Naive thymus-derived CD4-positive, alpha-beta T cell (primary cell): ENCODE measurements at regions of chr6 and their contacts with region 1.

Region 1: GRCh38 chr6:26045065-26045927 is 41.9 kb upstream of the HFE start:
- DNase-seq: peak; percentile 39 to 93 (median 89)
- ATAC-seq: peak; percentile 68
- H3K4me3 ChIP-seq: peak overlapping the region; percentile 91
- H3K4me3 Mint-ChIP-seq: peak overlapping the region; percentile 87 to 98 (median 94)
- H3K27ac ChIP-seq: peak overlapping the region; percentile 90
- H3K27ac Mint-ChIP-seq: peak overlapping the region; percentile 80 to 98 (median 95)
- H3K4me1 ChIP-seq: peaks cover 7 to 19% of the 10 kb centered on the region in 2 donors
- H3K4me1 Mint-ChIP-seq: peaks cover 8 to 51% (median 20%) of the 10 kb centered on the region in 7 donors
- H3K27me3 ChIP-seq: no peaks in the 10 kb centered on the region
- H3K27me3 Mint-ChIP-seq: peaks cover 0 to 3% (median 0%) of the 10 kb centered on the region in 5 donors

Region 2: GRCh38 chr6:25576919-25577318 is 468.4 kb before region 1 on chr6:
- CTCF ChIA-PET with region 1: no interaction called
- POLR2A ChIA-PET with region 1: no interaction called
- intact Hi-C with region 1: no loop called
- DNase-seq: no peak
- ATAC-seq: no peak
- H3K4me3 ChIP-seq: no peak overlapping the region
- H3K4me3 Mint-ChIP-seq: no peak overlapping the region
- H3K27ac ChIP-seq: no peak overlapping the region
- H3K27ac Mint-ChIP-seq: no peak overlapping the region
- H3K4me1 ChIP-seq: peaks cover 0 to 8% of the 10 kb centered on the region in 2 donors
- H3K4me1 Mint-ChIP-seq: peaks cover 1 to 20% (median 13%) of the 10 kb centered on the region in 7 donors
- H3K27me3 ChIP-seq: no peaks in the 10 kb centered on the region
- H3K27me3 Mint-ChIP-seq: peaks cover 0 to 7% (median 0%) of the 10 kb centered on the region in 5 donors

Region 3: DNA sequence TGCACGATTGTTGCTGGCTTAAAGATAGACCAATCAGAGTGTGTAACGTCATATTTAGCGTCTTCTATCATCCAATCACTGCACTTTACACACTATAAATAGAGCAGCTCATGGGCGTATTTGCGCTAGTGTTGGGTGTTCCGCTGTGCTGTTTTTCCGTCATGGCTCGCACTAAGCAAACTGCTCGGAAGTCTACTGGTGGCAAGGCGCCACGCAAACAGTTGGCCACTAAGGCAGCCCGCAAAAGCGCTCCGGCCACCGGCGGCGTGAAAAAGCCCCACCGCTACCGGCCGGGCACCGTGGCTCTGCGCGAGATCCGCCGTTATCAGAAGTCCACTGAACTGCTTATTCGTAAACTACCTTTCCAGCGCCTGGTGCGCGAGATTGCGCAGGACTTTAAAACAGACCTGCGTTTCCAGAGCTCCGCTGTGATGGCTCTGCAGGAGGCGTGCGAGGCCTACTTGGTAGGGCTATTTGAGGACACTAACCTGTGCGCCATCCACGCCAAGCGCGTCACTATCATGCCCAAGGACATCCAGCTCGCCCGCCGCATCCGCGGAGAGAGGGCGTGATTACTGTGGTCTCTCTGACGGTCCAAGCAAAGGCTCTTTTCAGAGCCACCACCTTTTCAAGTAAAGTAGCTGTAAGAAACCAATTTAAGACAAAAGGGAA is 24.8 kb before region 1 on chr6:
- CTCF ChIA-PET with region 1: interaction called, 69 read pairs
- POLR2A ChIA-PET with region 1: interaction called, 2,497 read pairs
- intact Hi-C with region 1: loop called (anchors 1 kb)
- DNase-seq: peak; percentile 68 to 94 (median 91)
- ATAC-seq: peak; percentile 66
- H3K4me3 ChIP-seq: peak overlapping the region; percentile 96
- H3K4me3 Mint-ChIP-seq: peak overlapping the region; percentile 82 to 100 (median 94)
- H3K27ac ChIP-seq: peak overlapping the region; percentile 97
- H3K27ac Mint-ChIP-seq: peak overlapping the region; percentile 95 to 100 (median 100)
- H3K4me1 ChIP-seq: peaks cover 0 to 10% of the 10 kb centered on the region in 2 donors
- H3K4me1 Mint-ChIP-seq: peaks cover 10 to 62% (median 45%) of the 10 kb centered on the region in 7 donors
- H3K27me3 ChIP-seq: no peaks in the 10 kb centered on the region
- H3K27me3 Mint-ChIP-seq: peaks cover 0 to 6% (median 0%) of the 10 kb centered on the region in 5 donors

Region 4: GRCh38 chr6:26103770-26104456 is 58.6 kb after region 1 on chr6:
- CTCF ChIA-PET with region 1: interaction called, 3 read pairs
- POLR2A ChIA-PET with region 1: interaction called, 70 read pairs
- intact Hi-C with region 1: loop called in 1 of 2 experiments (anchors 1 kb)
- DNase-seq: peak; percentile 83 to 96 (median 95)
- ATAC-seq: peak; percentile 94
- H3K4me3 ChIP-seq: peak overlapping the region; percentile 40
- H3K4me3 Mint-ChIP-seq: peak overlapping the region; percentile 81 to 97 (median 89)
- H3K27ac ChIP-seq: peak overlapping the region; percentile 75
- H3K27ac Mint-ChIP-seq: peak overlapping the region; percentile 96 to 100 (median 98)
- H3K4me1 ChIP-seq: peaks cover 4 to 12% of the 10 kb centered on the region in 2 donors
- H3K4me1 Mint-ChIP-seq: peaks cover 7 to 25% (median 22%) of the 10 kb centered on the region in 7 donors
- H3K27me3 ChIP-seq: no peaks in the 10 kb centered on the region
- H3K27me3 Mint-ChIP-seq: peaks cover 0 to 3% (median 0%) of the 10 kb centered on the region in 5 donors

Region 5: DNA sequence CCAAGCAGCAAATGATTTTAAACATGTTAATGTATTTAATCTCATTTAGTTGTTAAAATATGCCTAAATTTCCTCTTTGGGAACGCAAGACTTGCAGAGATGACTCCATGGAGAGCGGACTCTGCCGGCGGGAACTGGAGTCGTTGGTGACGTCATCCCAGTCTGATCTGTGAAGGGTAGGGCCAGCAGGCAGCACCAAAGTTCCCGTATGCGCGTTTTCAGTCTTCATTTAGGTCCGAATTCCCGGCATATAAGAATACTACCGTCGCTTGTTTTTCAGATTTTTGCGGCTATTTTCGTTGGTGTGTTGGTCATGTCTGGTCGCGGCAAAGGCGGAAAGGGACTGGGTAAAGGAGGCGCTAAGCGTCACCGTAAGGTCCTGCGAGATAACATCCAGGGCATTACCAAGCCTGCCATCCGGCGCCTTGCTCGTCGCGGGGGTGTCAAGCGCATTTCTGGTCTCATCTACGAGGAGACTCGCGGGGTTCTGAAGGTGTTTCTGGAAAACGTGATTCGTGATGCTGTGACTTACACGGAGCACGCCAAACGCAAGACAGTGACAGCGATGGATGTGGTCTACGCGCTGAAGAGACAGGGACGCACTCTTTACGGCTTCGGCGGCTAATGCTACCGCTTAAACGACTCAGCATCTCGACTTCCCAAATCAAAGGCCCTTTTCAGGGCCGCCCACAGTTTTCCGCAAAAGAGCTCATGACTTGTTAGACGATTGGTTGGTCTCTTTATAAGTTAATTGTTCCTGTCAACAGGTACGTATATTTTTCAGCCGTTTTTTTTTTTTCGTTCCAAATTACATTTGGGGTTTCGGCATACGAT is 159.3 kb after region 1 on chr6:
- CTCF ChIA-PET with region 1: no interaction called
- POLR2A ChIA-PET with region 1: interaction called, 257 read pairs
- intact Hi-C with region 1: no loop called
- DNase-seq: peak; percentile 67 to 95 (median 89)
- ATAC-seq: peak; percentile 72
- H3K4me3 ChIP-seq: peak overlapping the region; percentile 77
- H3K4me3 Mint-ChIP-seq: no peak overlapping the region
- H3K27ac ChIP-seq: peak overlapping the region; percentile 90
- H3K27ac Mint-ChIP-seq: no peak overlapping the region
- H3K4me1 ChIP-seq: peaks cover 20 to 23% of the 10 kb centered on the region in 2 donors
- H3K4me1 Mint-ChIP-seq: peaks cover 9 to 36% (median 26%) of the 10 kb centered on the region in 7 donors
- H3K27me3 ChIP-seq: no peaks in the 10 kb centered on the region
- H3K27me3 Mint-ChIP-seq: peaks cover 0 to 5% (median 0%) of the 10 kb centered on the region in 5 donors

Region 6: GRCh38 chr6:26312501-26313390 is 267.4 kb after region 1 on chr6:
- CTCF ChIA-PET with region 1: no interaction called
- POLR2A ChIA-PET with region 1: no interaction called
- intact Hi-C with region 1: no loop called
- DNase-seq: peak; percentile 64 to 91 (median 86)
- ATAC-seq: peak; percentile 75
- H3K4me3 ChIP-seq: peak overlapping the region; percentile 81
- H3K4me3 Mint-ChIP-seq: peak overlapping the region; percentile 83 to 100 (median 96)
- H3K27ac ChIP-seq: peak overlapping the region; percentile 55
- H3K27ac Mint-ChIP-seq: peak overlapping the region; percentile 82 to 100 (median 96)
- H3K4me1 ChIP-seq: peaks cover 4 to 19% of the 10 kb centered on the region in 2 donors
- H3K4me1 Mint-ChIP-seq: peaks cover 5 to 51% (median 37%) of the 10 kb centered on the region in 7 donors
- H3K27me3 ChIP-seq: no peaks in the 10 kb centered on the region
- H3K27me3 Mint-ChIP-seq: peaks cover 0 to 8% (median 0%) of the 10 kb centered on the region in 5 donors

Region 7: DNA sequence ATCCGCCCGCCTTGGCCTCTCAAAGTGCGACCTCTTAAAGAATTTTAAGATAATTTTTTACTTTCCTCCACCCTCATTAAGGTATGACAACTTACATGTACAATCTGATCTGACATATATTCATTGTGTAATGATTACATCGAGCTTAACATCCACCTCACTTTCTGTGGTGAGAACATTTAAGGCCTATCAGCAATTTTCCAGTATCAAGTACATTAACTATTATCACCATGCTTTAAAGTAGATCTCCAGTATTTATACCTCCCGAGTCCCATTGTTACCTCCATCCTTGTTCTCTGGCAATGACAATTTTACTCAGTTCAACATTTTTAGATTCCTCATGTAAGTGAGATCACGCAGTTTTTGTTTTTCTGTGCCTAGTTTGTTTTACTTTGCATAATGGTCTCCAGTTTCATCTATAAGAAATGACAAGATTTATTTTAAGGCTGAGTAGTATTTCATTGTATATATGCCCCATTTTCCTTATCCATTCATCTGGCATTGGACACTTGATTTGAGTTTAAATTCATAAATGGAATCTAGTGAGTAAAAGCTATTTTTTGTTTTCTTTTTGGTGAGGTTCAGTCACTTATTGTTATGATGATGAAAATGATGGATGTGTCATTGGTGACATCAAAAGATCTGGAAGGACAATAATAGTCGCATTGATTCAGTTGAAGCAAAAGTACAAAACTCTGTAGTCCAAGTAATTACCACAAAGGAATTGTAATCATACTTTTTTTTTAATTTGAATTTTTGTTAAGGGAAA is 1779.9 kb after region 1 on chr6:
- CTCF ChIA-PET with region 1: no interaction called
- POLR2A ChIA-PET with region 1: interaction called, 14 read pairs
- intact Hi-C with region 1: no loop called
- DNase-seq: no peak
- ATAC-seq: no peak
- H3K4me3 ChIP-seq: peak overlapping the region; percentile 87
- H3K4me3 Mint-ChIP-seq: peak overlapping the region; percentile 82 to 99 (median 94)
- H3K27ac ChIP-seq: peak overlapping the region; percentile 89
- H3K27ac Mint-ChIP-seq: peak overlapping the region; percentile 90 to 100 (median 98)
- H3K4me1 ChIP-seq: peaks cover 6% of the 10 kb centered on the region in 2 donors
- H3K4me1 Mint-ChIP-seq: peaks cover 11 to 50% (median 33%) of the 10 kb centered on the region in 7 donors
- H3K27me3 ChIP-seq: no peaks in the 10 kb centered on the region
- H3K27me3 Mint-ChIP-seq: peaks cover 0 to 4% (median 0%) of the 10 kb centered on the region in 5 donors